B cell (primary cell): ENCODE measurements at regions of chr1 and their contacts with region 1.

Region 1: DNA sequence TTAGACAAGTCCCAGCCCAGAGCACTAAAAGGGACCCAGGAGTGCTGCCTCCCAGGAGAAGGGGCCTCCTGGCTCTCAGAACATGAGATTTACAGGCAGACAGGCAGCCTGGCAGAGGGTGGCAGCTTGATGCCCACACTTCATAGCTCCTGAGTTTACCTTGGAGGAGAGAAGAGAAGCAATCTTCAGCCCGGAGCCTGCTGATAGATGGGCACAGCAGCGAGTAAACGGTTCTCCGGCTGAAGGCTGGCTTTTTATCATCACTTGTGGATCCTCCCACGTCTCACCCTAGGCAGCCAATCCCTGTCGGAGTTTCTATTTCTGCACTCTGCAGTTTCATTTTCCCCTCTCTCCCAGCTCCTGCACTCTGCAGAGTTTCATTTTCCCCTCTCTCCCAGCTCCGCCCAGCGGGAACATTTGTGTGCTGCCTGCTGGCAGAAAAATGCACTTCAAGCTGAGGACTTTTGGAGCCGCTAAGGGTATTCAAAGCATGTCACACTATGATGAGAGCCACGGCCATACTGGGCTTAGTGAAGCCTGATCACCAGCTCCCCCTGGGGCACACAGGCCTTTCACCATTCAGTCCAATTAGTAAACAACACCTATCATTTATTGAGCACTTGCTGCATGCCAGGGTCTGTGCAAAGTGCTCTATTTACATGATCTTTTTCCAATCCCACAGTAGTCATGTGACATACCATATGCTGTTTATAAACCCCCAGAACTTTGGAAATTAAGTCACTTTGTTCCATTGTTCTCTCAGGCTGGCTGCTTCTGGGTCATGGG is at the start of gene IFI6:
- DNase-seq: peak; percentile 83
- ATAC-seq: peak; percentile 90
- H3K4me3 ChIP-seq: peak within 1 kb of the TSS; percentile 59 to 85 (median 75)
- H3K4me3 Mint-ChIP-seq: peak within 1 kb of the TSS; percentile 93
- H3K27ac ChIP-seq: peak within 1 kb of the TSS; percentile 84 to 89
- H3K27ac Mint-ChIP-seq: peak within 1 kb of the TSS; percentile 97
- H3K4me1 ChIP-seq: peaks cover 14 to 24% of the 10 kb centered on the region in 2 donors
- H3K4me1 Mint-ChIP-seq: peaks cover 26% of the 10 kb centered on the region
- H3K27me3 ChIP-seq: no peaks in the 10 kb centered on the region
- H3K27me3 Mint-ChIP-seq: no peaks in the 10 kb centered on the region
- CTCF ChIP-seq: peak; percentile 45
- total RNA-seq, gene IFI6: 12.0 and 12.7 TPM in 2 replicates

Region 2: GRCh38 chr1:27007909-27008581 is 664.1 kb before region 1 on chr1:
- CTCF ChIA-PET with region 1: no interaction called
- POLR2A ChIA-PET with region 1: interaction called, 11 read pairs
- intact Hi-C with region 1: no loop called
- DNase-seq: no peak
- ATAC-seq: no peak
- H3K4me3 ChIP-seq: no peak overlapping the region
- H3K4me3 Mint-ChIP-seq: no peak overlapping the region
- H3K27ac ChIP-seq: no peak overlapping the region
- H3K27ac Mint-ChIP-seq: no peak overlapping the region
- H3K4me1 ChIP-seq: peaks cover 12% of the 10 kb centered on the region in 2 donors
- H3K4me1 Mint-ChIP-seq: peaks cover 12% of the 10 kb centered on the region
- H3K27me3 ChIP-seq: peaks cover 0 to 22% (median 11%) of the 10 kb centered on the region in 4 experiments
- H3K27me3 Mint-ChIP-seq: peaks cover 18% of the 10 kb centered on the region
- CTCF ChIP-seq: no peak

Region 3: GRCh38 chr1:27725374-27726173 is 53.4 kb after region 1 on chr1 and contains the start of gene FAM76A:
- CTCF ChIA-PET with region 1: interaction called, 11 read pairs
- POLR2A ChIA-PET with region 1: interaction called, 18 read pairs
- intact Hi-C with region 1: loop called (anchors 1 kb)
- DNase-seq: peak; percentile 100
- ATAC-seq: peak; percentile 91
- H3K4me3 ChIP-seq: peak within 1 kb of the TSS; percentile 68 to 94 (median 74)
- H3K4me3 Mint-ChIP-seq: peak within 1 kb of the TSS; percentile 94
- H3K27ac ChIP-seq: peak within 1 kb of the TSS; percentile 96 to 98
- H3K27ac Mint-ChIP-seq: peak within 1 kb of the TSS; percentile 98
- H3K4me1 ChIP-seq: peaks cover 17% of the 10 kb centered on the region in 2 donors
- H3K4me1 Mint-ChIP-seq: peaks cover 25% of the 10 kb centered on the region
- H3K27me3 ChIP-seq: no peaks in the 10 kb centered on the region
- H3K27me3 Mint-ChIP-seq: no peaks in the 10 kb centered on the region
- CTCF ChIP-seq: peak; percentile 27
- total RNA-seq, gene FAM76A: 25.0 and 28.5 TPM in 2 replicates